ENCODE measurements at regions of chr12 and their contacts with region 1.

Region 1: DNA sequence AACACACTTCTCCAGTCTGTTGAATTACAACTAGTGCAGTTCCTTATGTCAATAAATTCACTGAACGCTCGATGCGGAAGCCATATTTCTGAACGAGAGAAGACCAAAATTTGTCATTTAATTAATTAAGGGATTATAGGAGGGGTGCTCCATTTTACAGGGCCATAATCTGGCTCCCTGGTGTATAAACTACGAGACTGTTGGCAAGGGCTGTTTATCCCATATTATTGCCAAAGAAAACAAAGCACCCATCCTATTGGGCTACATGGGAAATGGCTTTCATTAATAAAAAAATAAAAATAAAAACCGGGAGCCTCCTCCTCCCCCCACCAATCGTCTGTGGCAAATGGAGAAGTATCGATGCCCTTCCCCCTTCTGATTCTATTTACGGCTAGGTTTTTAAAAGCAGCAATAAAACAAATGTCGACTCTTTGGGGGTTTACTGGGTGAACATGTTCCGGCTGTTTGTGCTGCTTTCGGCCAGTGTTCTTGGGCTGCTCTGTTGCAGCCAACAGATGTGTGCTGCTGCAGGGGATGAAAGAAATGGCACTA is 24.8 kb downstream of the ATF7 start:
- DNase-seq: no peak
- H3K4me3 Mint-ChIP-seq: no peak overlapping the region
- H3K27ac Mint-ChIP-seq: no peak overlapping the region
- H3K4me1 Mint-ChIP-seq: no peaks in the 10 kb centered on the region
- H3K27me3 Mint-ChIP-seq: no peaks in the 10 kb centered on the region
- CTCF ChIP-seq: no peak

Region 2: GRCh38 chr12:53543539-53543938 is 57.8 kb before region 1 on chr12:
- CTCF ChIA-PET with region 1: no interaction called
- intact Hi-C with region 1: loop called (anchors 10 kb)
- DNase-seq: peak; percentile 40
- H3K4me3 Mint-ChIP-seq: no peak overlapping the region
- H3K27ac Mint-ChIP-seq: no peak overlapping the region
- H3K4me1 Mint-ChIP-seq: no peaks in the 10 kb centered on the region
- H3K27me3 Mint-ChIP-seq: no peaks in the 10 kb centered on the region
- CTCF ChIP-seq: peak; percentile 25

Region 3: DNA sequence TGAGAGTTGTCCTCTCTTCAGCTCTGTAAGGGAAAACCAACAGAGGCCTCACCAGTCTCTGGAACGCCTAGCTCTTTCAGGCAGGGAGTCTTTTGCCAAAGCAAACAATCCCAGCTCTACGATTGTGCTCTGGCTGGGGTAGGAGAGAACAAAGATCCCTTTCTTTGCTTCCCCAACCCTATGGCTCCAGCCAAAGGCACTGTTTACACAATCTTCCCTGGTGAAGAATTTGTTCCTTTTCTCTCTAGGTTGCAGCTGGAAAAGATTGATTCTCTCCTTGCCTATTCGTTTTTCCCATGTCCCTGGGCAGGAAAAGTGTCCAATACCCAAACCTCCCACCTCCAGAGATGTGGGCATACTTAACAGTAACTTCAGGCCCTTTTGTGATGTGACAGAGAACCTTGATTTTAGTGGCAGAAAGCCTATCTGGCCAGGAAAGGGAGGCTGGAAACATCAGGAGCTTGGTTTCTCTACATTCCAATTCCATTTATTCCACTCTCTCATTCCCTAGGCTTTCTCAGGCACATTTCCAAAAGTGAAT is 57.7 kb after region 1 on chr12:
- CTCF ChIA-PET with region 1: no interaction called
- intact Hi-C with region 1: no loop called
- DNase-seq: peak; percentile 54
- H3K4me3 Mint-ChIP-seq: peak overlapping the region; percentile 32
- H3K27ac Mint-ChIP-seq: peak overlapping the region; percentile 75
- H3K4me1 Mint-ChIP-seq: peaks cover 21% of the 10 kb centered on the region
- H3K27me3 Mint-ChIP-seq: no peaks in the 10 kb centered on the region
- CTCF ChIP-seq: no peak

Measured in Calu3 (cell line).